B cell (primary cell): ENCODE measurements at regions of chr4 and their contacts with region 1.

Region 1: DNA sequence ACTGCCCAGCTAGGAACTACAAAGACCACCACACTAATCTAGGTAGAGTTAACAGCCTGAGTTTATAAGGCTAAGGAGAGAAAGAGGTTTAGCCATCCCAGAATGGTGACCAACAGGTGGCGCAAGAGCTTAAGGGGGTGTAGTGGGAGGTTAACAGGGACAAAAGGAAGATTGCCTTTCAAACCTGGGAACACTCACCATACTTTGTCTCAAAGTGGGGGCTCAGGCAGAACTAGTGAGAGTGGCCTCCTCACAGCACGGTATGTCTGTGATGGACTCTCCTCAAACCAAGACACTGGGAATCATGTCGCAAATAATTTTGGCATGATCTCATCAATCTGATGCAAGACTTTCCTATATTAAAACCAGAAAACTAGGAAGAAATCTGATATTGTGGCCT is 23.4 kb downstream of the CCNI start:
- DNase-seq: peak; percentile 70
- ATAC-seq: no peak
- H3K4me3 ChIP-seq: no peak overlapping the region
- H3K4me3 Mint-ChIP-seq: no peak overlapping the region
- H3K27ac ChIP-seq: no peak overlapping the region
- H3K27ac Mint-ChIP-seq: peak overlapping the region; percentile 59
- H3K4me1 ChIP-seq: no peaks in the 10 kb centered on the region
- H3K4me1 Mint-ChIP-seq: no peaks in the 10 kb centered on the region
- H3K27me3 ChIP-seq: no peaks in the 10 kb centered on the region
- H3K27me3 Mint-ChIP-seq: no peaks in the 10 kb centered on the region
- CTCF ChIP-seq: peak; percentile 61

Region 2: DNA sequence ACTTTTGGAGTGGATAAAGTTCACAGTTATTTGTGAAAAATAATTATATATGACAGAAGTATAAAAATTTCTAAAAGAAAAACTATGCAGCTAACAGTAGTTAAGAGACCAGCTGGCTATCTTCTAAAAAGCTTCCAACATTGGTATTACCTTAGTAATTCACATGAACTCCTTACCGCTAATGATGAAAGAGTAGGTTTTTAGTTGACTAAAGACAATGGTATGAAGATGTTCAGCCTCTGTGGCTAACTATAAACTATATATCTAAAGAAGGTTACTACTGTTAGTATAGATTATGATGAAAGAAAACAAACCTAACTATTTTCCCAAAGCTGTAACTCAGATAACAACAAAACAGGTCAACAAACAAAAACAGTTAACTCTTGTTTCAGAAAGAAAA is 13.0 kb after region 1 on chr4:
- CTCF ChIA-PET with region 1: interaction called, 10 read pairs
- POLR2A ChIA-PET with region 1: interaction called, 3 read pairs
- intact Hi-C with region 1: no loop called
- DNase-seq: no peak
- ATAC-seq: no peak
- H3K4me3 ChIP-seq: no peak overlapping the region
- H3K4me3 Mint-ChIP-seq: no peak overlapping the region
- H3K27ac ChIP-seq: no peak overlapping the region
- H3K27ac Mint-ChIP-seq: peak overlapping the region; percentile 7
- H3K4me1 ChIP-seq: peaks cover under 1 to 3% of the 10 kb centered on the region in 2 donors
- H3K4me1 Mint-ChIP-seq: peaks cover 25% of the 10 kb centered on the region
- H3K27me3 ChIP-seq: no peaks in the 10 kb centered on the region
- H3K27me3 Mint-ChIP-seq: no peaks in the 10 kb centered on the region
- CTCF ChIP-seq: no peak

Region 3: GRCh38 chr4:77082886-77083608 is 30.7 kb after region 1 on chr4:
- CTCF ChIA-PET with region 1: interaction called, 12 read pairs
- POLR2A ChIA-PET with region 1: no interaction called
- intact Hi-C with region 1: no loop called
- DNase-seq: no peak
- ATAC-seq: no peak
- H3K4me3 ChIP-seq: no peak overlapping the region
- H3K4me3 Mint-ChIP-seq: no peak overlapping the region
- H3K27ac ChIP-seq: no peak overlapping the region
- H3K27ac Mint-ChIP-seq: no peak overlapping the region
- H3K4me1 ChIP-seq: peaks cover 3 to 9% of the 10 kb centered on the region in 2 donors
- H3K4me1 Mint-ChIP-seq: peaks cover 17% of the 10 kb centered on the region
- H3K27me3 ChIP-seq: no peaks in the 10 kb centered on the region
- H3K27me3 Mint-ChIP-seq: no peaks in the 10 kb centered on the region
- CTCF ChIP-seq: no peak

Region 4: DNA sequence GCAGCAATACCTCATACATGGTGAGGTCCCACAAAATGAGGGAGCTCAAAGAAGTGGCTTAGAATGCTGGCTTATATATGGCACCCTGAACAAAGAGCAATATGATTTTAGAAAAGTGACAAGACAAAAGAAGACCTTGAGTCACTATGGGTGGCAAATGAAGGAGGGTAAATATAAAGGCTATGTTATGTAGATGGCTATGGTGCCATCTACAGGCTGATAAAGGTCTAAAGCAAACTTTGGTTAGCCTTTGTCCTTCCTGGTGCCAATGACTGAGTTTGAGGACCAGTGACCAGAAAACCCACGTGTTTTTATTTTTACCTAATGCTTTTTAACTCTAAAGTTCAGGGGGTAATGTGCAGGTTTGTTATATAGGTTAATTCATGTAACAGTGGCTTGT is 256.5 kb after region 1 on chr4:
- CTCF ChIA-PET with region 1: no interaction called
- POLR2A ChIA-PET with region 1: no interaction called
- intact Hi-C with region 1: loop called (anchors 5 kb)
- DNase-seq: peak; percentile 16
- ATAC-seq: no peak
- H3K4me3 ChIP-seq: no peak overlapping the region
- H3K4me3 Mint-ChIP-seq: no peak overlapping the region
- H3K27ac ChIP-seq: no peak overlapping the region
- H3K27ac Mint-ChIP-seq: no peak overlapping the region
- H3K4me1 ChIP-seq: no peaks in the 10 kb centered on the region
- H3K4me1 Mint-ChIP-seq: no peaks in the 10 kb centered on the region
- H3K27me3 ChIP-seq: no peaks in the 10 kb centered on the region
- H3K27me3 Mint-ChIP-seq: peaks cover 3% of the 10 kb centered on the region
- CTCF ChIP-seq: peak; percentile 29